ENCODE measurements at regions of chr18 and their contacts with region 1.

Region 1: DNA sequence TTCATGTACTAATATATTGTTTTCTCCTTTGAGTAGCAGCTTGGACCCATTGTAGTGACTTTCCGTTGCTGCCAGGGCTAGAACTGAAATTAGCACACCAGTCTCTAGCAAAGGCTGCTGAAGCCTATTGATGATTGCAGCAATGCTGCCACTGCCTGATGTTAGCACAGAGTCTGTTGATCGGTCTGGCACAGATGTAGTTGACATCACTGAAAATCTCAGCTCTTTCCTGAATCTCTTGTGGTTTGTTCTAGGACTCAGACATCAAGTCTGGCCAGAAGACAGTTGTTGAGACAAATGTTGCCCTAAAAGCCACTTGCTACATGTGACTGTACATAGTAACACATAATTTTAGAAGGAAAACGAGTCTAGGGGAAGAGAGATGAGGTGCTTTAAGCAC is 47.2 kb downstream of the VAPA start:
- DNase-seq: no peak
- H3K4me3 ChIP-seq: no peak overlapping the region
- H3K27me3 ChIP-seq: no peaks in the 10 kb centered on the region
- CTCF ChIP-seq: no peak

Region 2: GRCh38 chr18:9631814-9632496 is 329.1 kb before region 1 on chr18:
- CTCF ChIA-PET with region 1: no interaction called
- POLR2A ChIA-PET with region 1: no interaction called
- DNase-seq: peak; percentile 63
- H3K4me3 ChIP-seq: no peak overlapping the region
- H3K27me3 ChIP-seq: no peaks in the 10 kb centered on the region
- CTCF ChIP-seq: no peak

Region 3: DNA sequence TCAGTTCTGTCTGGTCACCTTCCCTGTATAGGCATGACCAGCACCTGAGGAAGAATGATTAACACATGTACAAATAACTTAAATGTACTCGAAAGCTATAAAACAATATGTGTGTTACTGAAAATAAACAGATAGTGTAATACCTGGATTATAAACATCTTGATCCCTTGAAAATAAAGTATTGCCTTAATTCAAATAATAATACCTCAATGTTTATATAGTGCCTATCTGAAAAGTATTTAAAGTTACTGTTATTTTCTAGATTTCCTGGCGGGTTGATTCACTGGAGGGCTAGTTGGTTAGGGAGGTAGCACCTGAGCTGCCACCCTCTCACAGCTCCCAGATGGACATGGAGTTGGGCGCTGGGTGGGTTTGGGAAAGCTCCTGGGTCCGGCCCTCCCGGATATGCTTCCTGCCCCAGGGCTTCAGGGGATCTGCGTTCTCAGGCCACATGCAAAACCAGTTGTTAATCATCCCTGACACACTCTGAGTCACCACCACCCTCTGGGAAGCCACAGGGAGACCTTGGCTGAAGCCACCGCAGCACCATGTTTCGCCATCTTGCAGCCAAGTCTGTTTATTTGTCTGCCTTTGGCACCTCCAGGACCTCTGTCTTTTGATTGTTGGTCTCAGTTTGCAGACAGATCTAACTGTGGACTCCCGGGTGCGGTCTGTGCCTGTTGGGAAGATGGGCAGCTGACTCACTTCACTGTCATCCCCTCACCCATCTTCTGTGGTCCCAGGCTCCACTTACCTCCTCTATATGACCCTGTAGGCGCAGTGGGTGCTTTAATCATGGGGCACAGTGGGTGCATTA is 217.6 kb before region 1 on chr18:
- CTCF ChIA-PET with region 1: no interaction called
- POLR2A ChIA-PET with region 1: no interaction called
- DNase-seq: peak; percentile 84
- H3K4me3 ChIP-seq: no peak overlapping the region
- H3K27me3 ChIP-seq: no peaks in the 10 kb centered on the region
- CTCF ChIP-seq: no peak

Region 4: DNA sequence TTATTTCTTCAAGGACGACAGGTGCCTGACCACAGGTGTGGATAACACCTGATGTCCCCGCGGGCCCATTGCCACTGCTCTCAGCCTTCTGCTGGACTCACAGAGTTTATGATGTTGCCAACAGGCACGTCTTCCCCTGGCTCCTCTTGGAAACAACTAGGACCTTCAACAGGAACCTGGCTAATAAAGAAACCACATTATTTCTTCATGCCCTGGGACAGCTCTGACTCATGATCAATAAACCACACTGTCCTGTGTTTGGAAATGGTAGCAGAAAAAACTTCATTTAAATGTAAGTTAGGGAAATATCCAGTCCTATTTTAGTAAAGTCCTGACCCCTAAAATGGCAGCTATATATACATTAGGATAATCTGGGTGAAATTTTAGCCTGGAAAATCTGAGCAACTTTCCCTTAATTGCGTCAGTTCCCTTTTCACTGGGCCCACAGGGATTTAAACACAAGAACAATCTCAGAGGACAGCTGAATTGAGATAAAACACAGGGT is 111.7 kb after region 1 on chr18:
- CTCF ChIA-PET with region 1: no interaction called
- POLR2A ChIA-PET with region 1: interaction called, 25 read pairs
- DNase-seq: peak; percentile 48
- H3K4me3 ChIP-seq: no peak overlapping the region
- H3K27me3 ChIP-seq: no peaks in the 10 kb centered on the region; the same call in 1 of the 2 replicates
- CTCF ChIP-seq: no peak